Activated T-helper 1 cell treated with anti-CD3 and anti-CD28 coated beads, Interleukin-12 subunit alpha, Interleukin-12 subunit beta, Interleukin-2, Interleukin-4 antibody, amounts not matched to agents 30 ng/mL and 10 ng/mL and 1 ng/mL, durations not matched to agents 14 hours and 24 hours and 36 hours (primary cell): ENCODE measurements at regions of chr1 and their contacts with region 1.

Region 1: GRCh38 chr1:117367047-117368018 is at the start of gene MAN1A2:
- DNase-seq: peak; percentile 74
- H3K4me3 Mint-ChIP-seq: peak within 1 kb of the TSS; percentile 97
- H3K27ac Mint-ChIP-seq: peak within 1 kb of the TSS; percentile 88
- H3K4me1 Mint-ChIP-seq: peaks cover 60% of the 10 kb centered on the region
- H3K27me3 Mint-ChIP-seq: no peaks in the 10 kb centered on the region
- total RNA-seq, gene MAN1A2: 30.1 and 32.5 TPM in 2 replicates

Region 2: GRCh38 chr1:117416546-117417125 is 49.3 kb after region 1 on chr1:
- intact Hi-C with region 1: loop called (anchors 5 kb)
- DNase-seq: no peak
- H3K4me3 Mint-ChIP-seq: no peak overlapping the region
- H3K27ac Mint-ChIP-seq: no peak overlapping the region
- H3K4me1 Mint-ChIP-seq: peaks cover 5% of the 10 kb centered on the region
- H3K27me3 Mint-ChIP-seq: no peaks in the 10 kb centered on the region

Region 3: DNA sequence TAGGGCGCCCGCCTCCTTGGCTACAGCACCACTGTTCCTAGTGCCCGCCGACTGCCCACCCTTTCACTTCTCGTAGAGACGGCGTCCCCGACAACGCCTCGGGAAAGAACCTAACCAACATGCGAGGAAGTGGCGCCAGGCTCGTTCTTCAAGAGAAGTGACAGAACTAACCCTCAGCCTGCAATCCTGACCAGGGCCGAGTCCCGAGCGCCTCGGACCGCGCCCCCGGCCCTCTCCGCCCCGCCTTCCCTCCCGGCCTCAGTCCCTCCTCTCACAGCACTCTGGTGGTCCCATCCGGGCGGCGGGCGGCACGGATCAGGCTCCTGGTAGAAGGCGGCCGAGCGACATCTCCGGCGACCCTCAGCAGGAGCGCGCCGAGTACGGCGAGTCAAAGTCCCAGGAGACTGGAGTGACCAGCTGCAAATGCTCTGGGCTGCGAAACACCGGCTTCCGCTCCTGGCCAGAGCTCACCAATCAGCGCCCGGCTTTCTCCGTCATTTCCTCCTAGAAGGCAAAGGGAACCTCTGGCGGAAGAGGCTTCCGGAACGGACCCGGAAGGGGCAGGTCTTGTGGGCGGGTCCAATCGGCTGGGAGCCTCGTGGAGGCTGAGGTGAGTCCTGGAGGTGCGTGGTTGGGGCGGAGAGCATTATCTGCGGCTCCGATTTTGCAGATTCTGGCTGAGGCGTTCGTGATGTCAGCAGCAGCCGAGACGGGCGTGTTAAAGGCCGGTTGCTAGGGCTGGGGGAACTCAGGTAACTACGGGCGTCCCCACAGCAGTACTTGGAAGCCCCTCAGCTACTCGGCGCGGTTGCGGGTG is 562.0 kb after region 1 on chr1 and contains the starts of genes GDAP2 and WDR3:
- intact Hi-C with region 1: loop called (anchors 1 kb)
- DNase-seq: peak; percentile 96
- H3K4me3 Mint-ChIP-seq: peak within 1 kb of the TSS; percentile 96
- H3K27ac Mint-ChIP-seq: peak within 1 kb of the TSS; percentile 89
- H3K4me1 Mint-ChIP-seq: peaks cover 46% of the 10 kb centered on the region
- H3K27me3 Mint-ChIP-seq: no peaks in the 10 kb centered on the region
- total RNA-seq, gene GDAP2: 21.4 and 29.0 TPM in 2 replicates
- total RNA-seq, gene WDR3: 68.3 and 72.8 TPM in 2 replicates